CD4-positive, alpha-beta T cell (primary cell): ENCODE measurements at regions of chr1 and their contacts with region 1.

Region 1: GRCh38 chr1:113835642-113836307 is 23.5 kb upstream of the RSBN1 start:
- DNase-seq: peak in 4 of 14 experiments; percentile 48 to 80 (median 74)
- ATAC-seq: peak; percentile 57
- H3K4me3 ChIP-seq: no peak overlapping the region
- H3K4me3 Mint-ChIP-seq: no peak overlapping the region
- H3K27ac ChIP-seq: no peak overlapping the region
- H3K27ac Mint-ChIP-seq: no peak overlapping the region
- H3K4me1 ChIP-seq: no peaks in the 10 kb centered on the region
- H3K4me1 Mint-ChIP-seq: peaks cover 11% of the 10 kb centered on the region
- H3K27me3 ChIP-seq: no peaks in the 10 kb centered on the region
- H3K27me3 Mint-ChIP-seq: no peaks in the 10 kb centered on the region
- CTCF ChIP-seq: peak; percentile 86

Region 2: DNA sequence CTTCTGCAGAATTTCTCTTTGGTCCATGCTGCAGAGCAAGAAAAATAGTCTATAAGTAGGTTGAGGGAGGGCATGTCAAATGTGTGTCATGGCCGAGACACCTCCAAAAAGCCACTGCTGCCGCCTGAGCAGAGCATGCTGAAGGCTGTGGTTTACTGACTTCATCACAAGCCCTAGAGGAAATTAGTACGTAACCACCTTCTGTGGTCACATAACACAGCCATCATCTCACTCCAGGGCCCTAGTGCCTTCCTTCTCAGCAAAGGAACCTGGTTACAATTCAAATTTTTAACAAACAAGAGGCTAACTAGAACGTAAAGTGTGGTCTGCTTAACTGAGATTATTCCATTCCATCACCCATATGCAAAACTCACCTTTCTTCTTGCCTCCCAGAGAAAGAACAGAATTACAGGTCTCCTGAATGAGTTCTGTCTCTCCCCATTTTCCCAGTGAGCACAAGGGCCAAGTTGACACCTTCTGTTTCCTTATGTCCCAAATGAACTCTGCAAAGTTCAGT is 35.9 kb after region 1 on chr1 and contains the start of gene PTPN22:
- CTCF ChIA-PET with region 1: interaction called, 5 read pairs
- POLR2A ChIA-PET with region 1: no interaction called
- intact Hi-C with region 1: loop called (anchors 1 to 2 kb)
- DNase-seq: peak; percentile 65 to 95 (median 75)
- ATAC-seq: peak; percentile 92
- H3K4me3 ChIP-seq: peak within 1 kb of the TSS; percentile 55
- H3K4me3 Mint-ChIP-seq: peak within 1 kb of the TSS; percentile 90
- H3K27ac ChIP-seq: peak within 1 kb of the TSS; percentile 75 to 78
- H3K27ac Mint-ChIP-seq: peak within 1 kb of the TSS; percentile 94
- H3K4me1 ChIP-seq: peaks cover 38% of the 10 kb centered on the region
- H3K4me1 Mint-ChIP-seq: peaks cover 75% of the 10 kb centered on the region
- H3K27me3 ChIP-seq: no peaks in the 10 kb centered on the region
- H3K27me3 Mint-ChIP-seq: no peaks in the 10 kb centered on the region
- CTCF ChIP-seq: no peak
- total RNA-seq, gene PTPN22: 28.3 to 30.2 TPM

Region 3: GRCh38 chr1:113928941-113929749 is 93.4 kb after region 1 on chr1 and contains the start of gene HIPK1:
- CTCF ChIA-PET with region 1: interaction called, 13 read pairs
- POLR2A ChIA-PET with region 1: interaction called, 13 read pairs
- intact Hi-C with region 1: loop called in 1 of 2 experiments (anchors 2 kb)
- DNase-seq: peak; percentile 84 to 95 (median 92)
- ATAC-seq: peak; percentile 66
- H3K4me3 ChIP-seq: peak within 1 kb of the TSS; percentile 96
- H3K4me3 Mint-ChIP-seq: peak within 1 kb of the TSS; percentile 98
- H3K27ac ChIP-seq: peak within 1 kb of the TSS; percentile 98
- H3K27ac Mint-ChIP-seq: peak within 1 kb of the TSS; percentile 100
- H3K4me1 ChIP-seq: peaks cover 33% of the 10 kb centered on the region
- H3K4me1 Mint-ChIP-seq: peaks cover 57% of the 10 kb centered on the region
- H3K27me3 ChIP-seq: no peaks in the 10 kb centered on the region
- H3K27me3 Mint-ChIP-seq: no peaks in the 10 kb centered on the region
- CTCF ChIP-seq: no peak
- total RNA-seq, gene HIPK1: 245 to 251 TPM

Region 4: DNA sequence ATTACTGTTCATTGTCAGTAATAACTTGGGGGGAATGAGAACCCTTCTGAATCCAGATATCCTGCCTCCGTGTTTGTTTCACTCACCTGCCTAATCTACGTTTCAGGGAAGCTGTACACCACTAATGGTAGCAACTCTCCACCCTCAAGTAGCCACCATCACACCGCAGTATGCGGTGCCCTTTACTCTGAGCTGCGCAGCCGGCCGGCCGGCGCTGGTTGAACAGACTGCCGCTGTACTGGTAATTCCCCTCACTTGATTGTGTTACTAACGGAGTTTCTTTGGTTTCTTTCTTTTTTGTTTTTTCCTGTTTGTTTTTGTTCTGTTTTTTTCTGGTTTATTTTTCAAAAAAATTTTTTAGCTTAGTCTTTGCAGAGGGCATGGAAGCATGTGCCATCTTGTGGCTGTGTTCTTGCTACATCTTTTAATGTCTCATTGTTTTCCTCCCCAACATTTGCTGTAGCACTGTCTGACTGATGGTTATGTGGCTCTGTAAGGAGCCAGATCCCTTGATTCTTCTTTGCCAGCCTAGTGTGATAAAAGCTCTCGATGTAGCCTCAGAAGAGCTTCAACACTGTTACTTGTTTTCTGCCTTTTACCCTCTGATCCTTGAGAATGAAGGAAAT is 127.6 kb after region 1 on chr1:
- CTCF ChIA-PET with region 1: no interaction called
- POLR2A ChIA-PET with region 1: interaction called, 4 read pairs
- intact Hi-C with region 1: loop called in 1 of 2 experiments (anchors 5 kb)
- DNase-seq: peak in 2 of 14 experiments; percentile 36 to 39
- ATAC-seq: peak; percentile 56
- H3K4me3 ChIP-seq: no peak overlapping the region
- H3K4me3 Mint-ChIP-seq: no peak overlapping the region
- H3K27ac ChIP-seq: no peak overlapping the region
- H3K27ac Mint-ChIP-seq: peak overlapping the region; percentile 65
- H3K4me1 ChIP-seq: no peaks in the 10 kb centered on the region
- H3K4me1 Mint-ChIP-seq: peaks cover 26% of the 10 kb centered on the region
- H3K27me3 ChIP-seq: no peaks in the 10 kb centered on the region
- H3K27me3 Mint-ChIP-seq: no peaks in the 10 kb centered on the region
- CTCF ChIP-seq: no peak

Region 5: DNA sequence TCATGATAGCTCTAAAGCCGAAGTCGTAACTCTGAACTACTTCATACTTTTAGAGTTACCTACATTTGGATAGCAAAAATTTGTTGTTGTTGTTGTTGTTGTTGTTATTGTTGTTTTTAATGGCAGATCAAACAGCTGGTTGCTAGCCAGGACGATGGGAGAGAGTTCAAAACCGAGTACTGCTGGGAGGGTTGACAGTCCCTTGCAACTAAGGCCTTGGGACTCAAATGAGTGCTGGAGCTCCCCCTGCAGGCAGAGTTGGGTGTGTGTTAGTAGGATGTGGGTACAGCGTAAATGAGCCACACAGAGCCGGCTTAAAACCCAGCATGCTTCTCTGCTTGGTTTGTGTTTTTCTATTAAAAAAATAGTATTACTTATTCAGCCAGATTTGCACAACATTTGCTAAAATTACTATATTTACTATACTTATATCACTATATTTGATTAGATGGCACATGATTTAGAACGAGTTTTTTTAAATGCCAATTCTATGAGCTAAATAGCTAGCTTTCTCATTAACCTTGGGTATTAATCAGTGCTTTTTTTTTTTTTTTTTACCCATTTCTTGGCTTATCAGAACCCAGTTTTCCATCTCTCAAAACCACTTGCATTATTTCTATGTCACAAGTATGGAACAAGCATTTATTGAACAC is 447.1 kb after region 1 on chr1:
- CTCF ChIA-PET with region 1: interaction called, 4 read pairs
- POLR2A ChIA-PET with region 1: no interaction called
- intact Hi-C with region 1: loop called (anchors 2 kb)
- DNase-seq: peak; percentile 70 to 91 (median 78)
- ATAC-seq: peak; percentile 100
- H3K4me3 ChIP-seq: no peak overlapping the region
- H3K4me3 Mint-ChIP-seq: no peak overlapping the region
- H3K27ac ChIP-seq: no peak overlapping the region
- H3K27ac Mint-ChIP-seq: no peak overlapping the region
- H3K4me1 ChIP-seq: no peaks in the 10 kb centered on the region
- H3K4me1 Mint-ChIP-seq: no peaks in the 10 kb centered on the region
- H3K27me3 ChIP-seq: no peaks in the 10 kb centered on the region
- H3K27me3 Mint-ChIP-seq: no peaks in the 10 kb centered on the region
- CTCF ChIP-seq: peak; percentile 84